ENCODE measurements at regions of chr9 and their contacts with region 1.

Region 1: DNA sequence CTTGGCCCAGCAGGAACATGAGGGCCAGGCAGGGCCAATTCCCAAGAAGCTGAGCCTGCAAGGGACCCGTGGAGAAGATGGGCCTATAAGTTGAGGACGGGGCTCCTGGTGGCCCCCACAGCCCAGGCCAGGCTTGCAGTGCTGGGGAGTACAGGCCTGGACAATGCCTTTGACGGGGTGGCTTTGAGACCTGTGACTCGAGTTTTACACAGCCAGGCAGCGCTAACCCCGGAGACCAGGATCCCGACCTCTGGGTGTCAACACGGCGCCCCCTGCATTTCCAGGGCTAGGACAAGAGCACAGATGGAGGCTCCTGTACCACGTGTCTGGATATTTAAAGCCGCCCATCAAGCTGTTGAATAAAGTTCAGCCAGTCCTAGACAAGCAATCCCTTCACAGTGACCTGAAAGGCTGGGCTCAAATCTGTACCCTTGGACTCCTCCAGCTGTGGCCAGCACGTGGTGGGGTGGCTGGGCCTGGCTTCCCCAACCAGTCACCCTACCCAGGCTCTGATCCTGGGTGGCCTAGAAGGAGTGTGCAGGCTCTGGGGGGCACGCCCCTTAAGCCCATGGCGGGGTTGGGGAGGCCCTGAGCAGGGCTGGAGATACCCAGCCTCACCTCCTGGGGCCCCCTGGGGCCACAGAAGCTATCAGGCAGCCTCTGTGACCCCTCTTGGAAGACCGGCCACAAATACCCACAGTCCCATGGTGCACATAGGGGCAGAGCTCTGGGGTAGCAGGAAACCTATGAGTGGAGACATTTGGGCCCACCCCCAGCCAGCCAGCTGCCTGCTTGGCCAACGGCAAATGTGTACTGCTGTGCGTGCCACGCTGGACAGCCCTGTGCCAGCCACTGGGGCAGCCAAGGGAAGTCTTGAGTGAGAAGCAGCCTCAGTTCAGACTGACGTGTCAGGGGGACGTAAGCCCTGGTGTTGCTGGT is 88.7 kb downstream of the NTNG2 start:
- DNase-seq: no peak
- ATAC-seq: no peak

Region 2: DNA sequence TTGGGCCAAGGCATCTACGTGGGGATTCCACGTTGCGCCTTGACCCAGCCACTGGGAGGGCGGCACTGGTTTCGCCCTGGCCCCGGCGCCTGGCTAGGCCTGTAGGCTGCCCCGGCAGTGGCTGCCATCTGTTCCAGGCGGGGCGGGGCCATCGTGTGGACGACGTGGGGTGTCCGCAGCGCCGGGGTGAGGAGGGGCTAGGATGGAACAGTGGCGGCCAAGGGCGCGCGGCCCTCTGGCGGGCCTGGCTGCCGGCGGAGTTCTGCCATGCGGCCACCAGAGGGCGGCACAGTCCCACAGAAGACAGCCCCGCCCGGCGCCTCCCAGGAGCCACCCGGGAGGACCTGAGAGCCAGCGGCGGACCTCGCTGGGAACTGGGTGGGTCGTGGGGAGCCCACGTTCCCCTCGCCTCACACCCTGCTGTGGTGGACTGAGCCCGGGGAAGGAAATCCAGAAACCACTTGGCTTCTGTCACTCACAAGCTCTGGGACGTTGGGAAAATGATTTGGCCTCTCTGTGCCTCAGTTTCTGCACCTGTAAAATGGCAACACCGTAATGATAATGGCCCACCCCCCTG is 488.1 kb before region 1 on chr9:
- intact Hi-C with region 1: loop called (anchors 5 kb)
- DNase-seq: peak; percentile 84
- ATAC-seq: peak; percentile 99

Measured in Right ventricle myocardium superior (tissue), 1 donor.